ENCODE measurements at regions of chr11 and their contacts with region 1.

Region 1: GRCh38 chr11:74018331-74019005 is 9.6 kb upstream of the UCP3 start:
- DNase-seq: peak; percentile 96 to 97
- H3K4me3 ChIP-seq: no peak overlapping the region
- H3K27ac ChIP-seq: peak overlapping the region; percentile 75 to 81
- H3K4me1 ChIP-seq: peaks cover 0 to 24% (median 18%) of the 10 kb centered on the region in 4 donors
- H3K27me3 ChIP-seq: no peaks in the 10 kb centered on the region
- CTCF ChIP-seq: no peak

Region 2: GRCh38 chr11:73982969-73983740 is 35.3 kb before region 1 on chr11:
- intact Hi-C with region 1: loop called (anchors 5 kb)
- DNase-seq: peak; percentile 90 to 96
- H3K4me3 ChIP-seq: peak overlapping the region; percentile 57 to 62
- H3K27ac ChIP-seq: peak overlapping the region; percentile 85 to 86
- H3K4me1 ChIP-seq: peaks cover 0 to 25% (median 15%) of the 10 kb centered on the region in 4 donors
- H3K27me3 ChIP-seq: no peaks in the 10 kb centered on the region
- CTCF ChIP-seq: no peak

Region 3: GRCh38 chr11:74094400-74094799 is 75.9 kb after region 1 on chr11:
- intact Hi-C with region 1: no loop called
- DNase-seq: no peak
- H3K4me3 ChIP-seq: no peak overlapping the region
- H3K27ac ChIP-seq: no peak overlapping the region
- H3K4me1 ChIP-seq: no peaks in the 10 kb centered on the region
- H3K27me3 ChIP-seq: no peaks in the 10 kb centered on the region
- CTCF ChIP-seq: no peak

Measured in tibial artery (tissue), 4 donors.